Activated T-helper 1 cell treated with anti-CD3 and anti-CD28 coated beads, Interleukin-12 subunit alpha, Interleukin-12 subunit beta, Interleukin-2, Interleukin-4 antibody, amounts not matched to agents 30 ng/mL and 10 ng/mL and 1 ng/mL, durations not matched to agents 14 hours and 24 hours and 36 hours (primary cell): ENCODE measurements at regions of chr7 and their contacts with region 1.

Region 1: DNA sequence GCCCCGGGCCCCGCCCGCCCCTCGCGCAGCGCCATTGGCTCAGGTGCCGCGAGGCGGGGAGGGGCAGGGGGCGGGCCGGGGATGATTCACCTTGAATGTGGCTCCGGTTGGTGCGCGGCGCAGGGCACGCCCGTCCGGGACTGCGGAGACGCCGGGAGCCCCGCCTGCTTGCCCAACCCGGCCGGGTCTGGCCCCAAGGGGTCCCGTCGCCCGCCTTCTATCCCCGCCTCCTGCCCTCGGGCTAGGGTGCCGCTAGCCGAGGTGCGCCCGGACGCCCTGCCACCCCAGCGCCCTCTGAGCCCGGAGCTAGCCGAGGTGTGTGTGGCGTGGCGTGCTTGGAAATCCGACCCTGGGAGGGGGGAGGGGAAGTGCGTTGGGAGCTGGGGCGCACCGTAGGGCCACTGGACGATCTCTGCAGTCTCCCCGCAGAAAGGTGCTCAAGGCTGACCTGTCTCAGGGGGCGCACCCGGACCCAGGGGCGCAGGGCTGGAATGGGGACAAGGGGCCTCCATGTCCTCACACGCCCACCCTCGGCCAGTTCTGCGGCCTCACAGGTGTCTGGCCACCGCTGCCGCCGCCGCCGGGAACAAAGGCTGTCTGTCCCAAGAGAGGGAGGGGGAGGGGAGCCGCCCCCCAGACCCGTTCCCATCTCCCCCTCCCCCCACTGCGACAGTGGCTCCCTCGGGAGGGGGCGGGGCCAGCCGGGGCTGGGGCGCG is 168.9 kb downstream of the NRF1 start:
- DNase-seq: peak; percentile 48
- H3K4me3 Mint-ChIP-seq: peak overlapping the region; percentile 63
- H3K27ac Mint-ChIP-seq: no peak overlapping the region
- H3K4me1 Mint-ChIP-seq: peaks cover 23% of the 10 kb centered on the region
- H3K27me3 Mint-ChIP-seq: peaks cover 67% of the 10 kb centered on the region

Region 2: DNA sequence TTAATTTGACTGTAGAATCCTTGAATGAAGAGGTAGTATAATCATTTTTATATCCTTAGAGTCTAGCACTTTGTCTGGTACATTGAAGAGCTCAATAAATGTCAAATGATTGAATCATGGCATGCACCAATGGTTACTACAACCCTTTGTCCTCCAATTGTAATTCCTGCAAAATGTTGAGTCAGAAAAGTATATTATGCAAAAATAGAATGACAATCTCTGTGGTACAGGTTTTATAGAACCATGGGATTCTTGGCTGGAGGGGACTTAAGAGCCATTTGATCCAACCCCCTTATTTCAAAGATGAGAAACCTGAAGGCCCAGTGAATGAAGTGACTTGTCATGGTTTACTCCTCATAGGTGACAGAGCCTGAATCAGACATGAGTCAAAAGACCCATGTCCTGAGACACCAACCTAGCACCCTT is 309.0 kb before region 1 on chr7:
- intact Hi-C with region 1: no loop called
- DNase-seq: no peak
- H3K4me3 Mint-ChIP-seq: no peak overlapping the region
- H3K27ac Mint-ChIP-seq: peak overlapping the region; percentile 35
- H3K4me1 Mint-ChIP-seq: peaks cover 31% of the 10 kb centered on the region
- H3K27me3 Mint-ChIP-seq: no peaks in the 10 kb centered on the region

Region 3: GRCh38 chr7:129797214-129797789 is 16.9 kb after region 1 on chr7:
- intact Hi-C with region 1: no loop called
- DNase-seq: no peak
- H3K4me3 Mint-ChIP-seq: no peak overlapping the region
- H3K27ac Mint-ChIP-seq: no peak overlapping the region
- H3K4me1 Mint-ChIP-seq: no peaks in the 10 kb centered on the region
- H3K27me3 Mint-ChIP-seq: peaks cover 8% of the 10 kb centered on the region

Region 4: DNA sequence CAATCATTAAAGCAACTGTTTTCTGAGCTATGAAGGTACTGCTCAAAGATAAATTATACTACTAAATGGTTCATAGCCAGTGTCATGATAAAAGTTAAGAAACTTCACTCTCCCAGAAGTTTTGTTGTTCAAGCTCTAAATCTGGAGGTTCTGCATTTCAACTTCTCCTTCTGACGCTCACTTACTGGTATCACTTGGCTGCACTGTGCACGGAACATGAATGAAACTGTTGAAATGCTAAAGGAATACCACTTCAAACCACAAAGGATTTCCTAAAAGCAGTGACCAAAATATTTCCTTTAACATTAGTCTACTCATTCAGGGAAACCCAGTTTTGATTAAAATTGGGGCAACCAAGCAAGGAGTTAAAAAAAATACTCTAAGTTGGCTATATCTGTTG is 78.8 kb after region 1 on chr7:
- intact Hi-C with region 1: no loop called
- DNase-seq: no peak
- H3K4me3 Mint-ChIP-seq: no peak overlapping the region
- H3K27ac Mint-ChIP-seq: no peak overlapping the region
- H3K4me1 Mint-ChIP-seq: peaks cover 47% of the 10 kb centered on the region
- H3K27me3 Mint-ChIP-seq: no peaks in the 10 kb centered on the region

Region 5: DNA sequence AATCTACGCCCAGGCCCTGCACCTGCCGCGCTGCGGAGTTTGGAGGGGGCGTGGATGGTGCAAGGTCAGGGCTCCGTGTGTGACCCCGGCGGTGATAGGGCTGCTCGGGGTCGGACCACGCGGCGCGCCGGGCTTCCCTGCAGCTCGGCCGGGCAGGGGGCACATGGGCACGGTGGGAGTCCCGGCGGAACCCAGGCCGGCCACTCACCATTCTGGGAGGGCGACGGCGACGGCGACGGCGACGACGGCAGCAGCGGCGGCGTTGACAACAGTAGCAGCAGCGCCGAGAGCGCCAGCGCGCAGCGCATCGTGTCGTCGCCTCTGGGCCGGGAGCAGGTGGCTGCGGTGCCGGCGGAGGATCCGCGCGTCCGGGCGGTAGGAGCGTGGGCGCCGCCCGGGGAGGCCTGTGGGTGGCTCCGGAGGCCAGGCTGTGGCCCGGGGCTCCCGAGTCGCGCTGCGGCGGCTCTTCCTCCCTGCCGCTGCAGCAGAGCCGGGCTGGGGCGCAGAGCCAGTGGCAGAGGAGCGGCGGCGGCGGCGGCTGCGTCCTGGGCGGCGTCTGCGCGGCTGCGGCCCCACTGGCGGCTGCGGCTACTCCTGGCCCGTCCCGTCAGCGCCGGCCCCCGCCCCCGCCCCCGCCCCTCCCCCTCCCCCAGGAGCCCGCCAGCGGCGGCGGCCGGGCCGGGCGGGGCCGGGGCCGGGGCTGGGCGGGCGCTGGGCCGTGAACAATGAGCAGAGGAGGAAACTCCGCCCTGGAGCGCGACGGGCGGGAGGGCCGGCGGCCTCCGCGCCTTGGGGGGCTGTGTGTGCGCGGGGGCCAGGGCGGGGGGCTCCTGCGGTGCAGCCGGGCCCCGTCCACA is 1775.9 kb after region 1 on chr7 and contains the start of gene PODXL:
- intact Hi-C with region 1: loop called (anchors 5 kb)
- DNase-seq: peak; percentile 64
- H3K4me3 Mint-ChIP-seq: peak within 1 kb of the TSS; percentile 69
- H3K27ac Mint-ChIP-seq: peak within 1 kb of the TSS; percentile 58
- H3K4me1 Mint-ChIP-seq: peaks cover 10% of the 10 kb centered on the region
- H3K27me3 Mint-ChIP-seq: peaks cover 71% of the 10 kb centered on the region
- total RNA-seq, gene PODXL: 0.75 and 1.3 TPM in 2 replicates